Naive thymus-derived CD4-positive, alpha-beta T cell (primary cell): ENCODE measurements at regions of chr22 and their contacts with region 1.

Region 1: DNA sequence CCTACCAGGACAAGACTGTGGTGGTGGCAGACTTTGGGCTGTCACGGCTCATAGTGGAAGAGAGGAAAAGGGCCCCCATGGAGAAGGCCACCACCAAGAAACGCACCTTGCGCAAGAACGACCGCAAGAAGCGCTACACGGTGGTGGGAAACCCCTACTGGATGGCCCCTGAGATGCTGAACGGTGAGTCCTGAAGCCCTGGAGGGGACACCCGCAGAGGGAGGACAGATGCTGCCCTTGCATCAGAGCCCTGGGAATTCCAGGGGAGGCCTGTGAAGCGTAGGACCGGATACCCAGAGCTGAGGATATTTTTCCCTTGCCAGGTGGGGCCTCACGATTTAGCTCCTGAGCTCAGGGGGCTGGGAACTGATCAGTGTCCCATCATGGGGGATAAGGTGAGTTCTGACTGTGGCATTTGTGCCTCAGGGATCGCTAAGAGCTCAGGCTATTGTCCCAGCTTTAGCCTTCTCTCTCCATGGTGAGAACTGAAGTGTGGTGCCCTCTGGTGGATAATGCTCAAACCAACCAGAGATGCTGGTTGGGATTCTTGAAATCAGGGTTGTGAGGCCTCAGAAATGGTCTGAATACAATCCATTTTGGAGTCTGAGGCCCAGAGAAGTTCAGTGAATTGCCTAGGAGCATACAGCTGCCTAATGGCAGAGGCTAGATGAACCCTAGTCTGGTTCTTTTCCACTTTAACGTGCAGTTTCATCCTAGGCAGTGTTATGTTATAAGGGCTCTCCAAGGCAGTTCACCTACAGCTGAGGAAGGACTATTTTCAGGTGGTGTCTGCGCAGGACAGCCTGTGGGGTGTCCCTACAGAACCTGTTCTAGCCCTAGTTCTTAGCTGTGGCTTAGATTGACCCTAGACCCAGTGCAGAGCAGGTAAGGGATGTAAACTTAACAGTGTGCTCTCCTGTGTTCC is 19.5 kb downstream of the PIK3IP1 start:
- DNase-seq: peak in 5 of 9 donors; percentile 38 to 58 (median 50)
- ATAC-seq: peak; percentile 81
- H3K4me3 ChIP-seq: no peak overlapping the region
- H3K4me3 Mint-ChIP-seq: peak overlapping the region in 4 of 10 donors; percentile 18 to 50 (median 28)
- H3K27ac ChIP-seq: peak overlapping the region; percentile 51
- H3K27ac Mint-ChIP-seq: peak overlapping the region; percentile 46 to 95 (median 86)
- H3K4me1 ChIP-seq: peaks cover 2 to 63% of the 10 kb centered on the region in 2 donors
- H3K4me1 Mint-ChIP-seq: peaks cover 25 to 91% (median 77%) of the 10 kb centered on the region in 7 donors
- H3K27me3 ChIP-seq: no peaks in the 10 kb centered on the region
- H3K27me3 Mint-ChIP-seq: no peaks in the 10 kb centered on the region

Region 2: DNA sequence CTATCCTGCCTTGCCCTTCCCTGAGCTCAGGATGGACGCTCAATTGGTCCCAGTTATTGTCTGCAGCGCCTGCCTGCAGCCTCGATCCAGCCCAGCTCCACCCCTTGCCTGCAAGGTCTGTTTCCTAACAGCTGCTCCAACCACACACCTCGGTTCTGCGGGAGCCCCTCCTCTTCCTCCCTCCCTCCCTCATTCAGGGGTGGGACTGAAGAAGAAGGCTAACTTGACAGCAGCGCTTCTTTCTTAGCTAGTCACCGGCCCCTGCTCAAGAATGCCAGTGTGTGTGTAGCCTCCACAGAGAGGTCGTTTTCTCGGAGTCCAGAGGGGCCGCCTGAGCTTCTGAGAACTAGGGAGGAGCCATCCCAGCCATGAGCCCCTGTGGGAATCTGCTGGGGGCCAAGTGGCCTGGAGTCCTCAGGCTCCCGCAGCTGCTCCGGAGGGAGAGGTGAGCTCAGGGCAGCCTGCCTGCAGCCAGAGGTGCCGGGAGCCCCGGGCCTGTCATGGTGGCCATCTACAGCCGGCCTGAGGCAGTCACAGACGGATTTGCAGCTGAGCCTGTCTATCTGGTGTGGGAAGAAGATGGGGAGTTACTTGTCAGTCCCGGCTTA is 24.5 kb before region 1 on chr22:
- CTCF ChIA-PET with region 1: interaction called, 8 read pairs
- POLR2A ChIA-PET with region 1: interaction called, 17 read pairs
- intact Hi-C with region 1: loop called in 1 of 2 experiments (anchors 2 kb)
- DNase-seq: peak; percentile 33 to 78 (median 73)
- ATAC-seq: peak; percentile 100
- H3K4me3 ChIP-seq: no peak overlapping the region
- H3K4me3 Mint-ChIP-seq: peak overlapping the region; percentile 73 to 93 (median 83)
- H3K27ac ChIP-seq: no peak overlapping the region
- H3K27ac Mint-ChIP-seq: peak overlapping the region; percentile 20 to 87 (median 71)
- H3K4me1 ChIP-seq: peaks cover 9 to 17% of the 10 kb centered on the region in 2 donors
- H3K4me1 Mint-ChIP-seq: peaks cover 8 to 41% (median 28%) of the 10 kb centered on the region in 7 donors
- H3K27me3 ChIP-seq: no peaks in the 10 kb centered on the region
- H3K27me3 Mint-ChIP-seq: no peaks in the 10 kb centered on the region

Region 3: GRCh38 chr22:31295831-31296657 is 23.3 kb after region 1 on chr22:
- CTCF ChIA-PET with region 1: interaction called, 73 read pairs
- POLR2A ChIA-PET with region 1: interaction called, 2,331 read pairs
- intact Hi-C with region 1: no loop called
- DNase-seq: no peak
- ATAC-seq: no peak
- H3K4me3 ChIP-seq: peak overlapping the region; percentile 5
- H3K4me3 Mint-ChIP-seq: peak overlapping the region; percentile 63 to 98 (median 81)
- H3K27ac ChIP-seq: peak overlapping the region; percentile 60
- H3K27ac Mint-ChIP-seq: peak overlapping the region in 8 of 9 donors; percentile 79 to 99 (median 88)
- H3K4me1 ChIP-seq: peaks cover 20 to 41% of the 10 kb centered on the region in 2 donors
- H3K4me1 Mint-ChIP-seq: peaks cover 25 to 75% (median 62%) of the 10 kb centered on the region in 7 donors
- H3K27me3 ChIP-seq: no peaks in the 10 kb centered on the region
- H3K27me3 Mint-ChIP-seq: peaks cover 0 to 3% (median 0%) of the 10 kb centered on the region in 5 donors